ENCODE measurements at regions of chr11 and their contacts with region 1.

Region 1: GRCh38 chr11:65506770-65507505 is 8.1 kb downstream of the MALAT1 start:
- DNase-seq: peak; percentile 43
- H3K4me3 Mint-ChIP-seq: no peak overlapping the region
- H3K27ac Mint-ChIP-seq: no peak overlapping the region
- H3K4me1 Mint-ChIP-seq: peaks cover 18% of the 10 kb centered on the region
- H3K27me3 Mint-ChIP-seq: peaks cover 9% of the 10 kb centered on the region
- CTCF ChIP-seq: no peak

Region 2: DNA sequence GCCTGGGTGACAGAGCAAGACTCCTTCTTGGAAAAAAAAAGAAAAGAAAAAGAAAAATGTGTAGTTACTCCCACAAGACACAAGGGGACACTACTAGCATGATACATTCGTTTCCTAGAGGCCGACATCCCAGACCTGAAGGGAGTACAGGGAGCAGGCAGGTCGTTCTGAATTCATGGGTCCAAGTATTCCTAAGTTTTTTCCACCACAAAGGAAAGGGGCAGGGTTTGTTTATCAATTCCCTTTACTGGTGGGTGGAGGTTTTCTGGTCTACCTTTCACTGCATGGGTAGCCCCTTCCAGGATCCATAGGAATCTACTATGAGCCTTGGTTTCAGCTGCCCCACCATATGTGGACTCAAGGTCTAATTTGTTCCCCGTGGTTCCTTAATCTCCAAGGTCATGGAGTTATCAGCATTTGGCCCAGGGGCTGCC is 140.6 kb before region 1 on chr11:
- CTCF ChIA-PET with region 1: no interaction called
- intact Hi-C with region 1: loop called (anchors 1 kb)
- DNase-seq: peak; percentile 49
- H3K4me3 Mint-ChIP-seq: no peak overlapping the region
- H3K27ac Mint-ChIP-seq: no peak overlapping the region
- H3K4me1 Mint-ChIP-seq: peaks cover 11% of the 10 kb centered on the region
- H3K27me3 Mint-ChIP-seq: no peaks in the 10 kb centered on the region
- CTCF ChIP-seq: peak; percentile 72

Region 3: GRCh38 chr11:65382033-65382807 is 124.7 kb before region 1 on chr11 and contains the start of gene SLC25A45:
- CTCF ChIA-PET with region 1: interaction called, 12 read pairs
- intact Hi-C with region 1: loop called (anchors 1 kb)
- DNase-seq: peak; percentile 98
- H3K4me3 Mint-ChIP-seq: peak within 1 kb of the TSS; percentile 58
- H3K27ac Mint-ChIP-seq: peak within 1 kb of the TSS; percentile 81
- H3K4me1 Mint-ChIP-seq: peaks cover 68% of the 10 kb centered on the region
- H3K27me3 Mint-ChIP-seq: no peaks in the 10 kb centered on the region
- CTCF ChIP-seq: peak; percentile 78
- total RNA-seq, gene SLC25A45: 2.9 and 4.0 TPM in 2 replicates

Region 4: GRCh38 chr11:65429724-65430405 is 77.1 kb before region 1 on chr11:
- CTCF ChIA-PET with region 1: interaction called, 3 read pairs
- intact Hi-C with region 1: loop called (anchors 2 kb)
- DNase-seq: peak; percentile 73
- H3K4me3 Mint-ChIP-seq: peak overlapping the region; percentile 90
- H3K27ac Mint-ChIP-seq: peak overlapping the region; percentile 99
- H3K4me1 Mint-ChIP-seq: peaks cover 69% of the 10 kb centered on the region
- H3K27me3 Mint-ChIP-seq: no peaks in the 10 kb centered on the region
- CTCF ChIP-seq: no peak

Region 5: DNA sequence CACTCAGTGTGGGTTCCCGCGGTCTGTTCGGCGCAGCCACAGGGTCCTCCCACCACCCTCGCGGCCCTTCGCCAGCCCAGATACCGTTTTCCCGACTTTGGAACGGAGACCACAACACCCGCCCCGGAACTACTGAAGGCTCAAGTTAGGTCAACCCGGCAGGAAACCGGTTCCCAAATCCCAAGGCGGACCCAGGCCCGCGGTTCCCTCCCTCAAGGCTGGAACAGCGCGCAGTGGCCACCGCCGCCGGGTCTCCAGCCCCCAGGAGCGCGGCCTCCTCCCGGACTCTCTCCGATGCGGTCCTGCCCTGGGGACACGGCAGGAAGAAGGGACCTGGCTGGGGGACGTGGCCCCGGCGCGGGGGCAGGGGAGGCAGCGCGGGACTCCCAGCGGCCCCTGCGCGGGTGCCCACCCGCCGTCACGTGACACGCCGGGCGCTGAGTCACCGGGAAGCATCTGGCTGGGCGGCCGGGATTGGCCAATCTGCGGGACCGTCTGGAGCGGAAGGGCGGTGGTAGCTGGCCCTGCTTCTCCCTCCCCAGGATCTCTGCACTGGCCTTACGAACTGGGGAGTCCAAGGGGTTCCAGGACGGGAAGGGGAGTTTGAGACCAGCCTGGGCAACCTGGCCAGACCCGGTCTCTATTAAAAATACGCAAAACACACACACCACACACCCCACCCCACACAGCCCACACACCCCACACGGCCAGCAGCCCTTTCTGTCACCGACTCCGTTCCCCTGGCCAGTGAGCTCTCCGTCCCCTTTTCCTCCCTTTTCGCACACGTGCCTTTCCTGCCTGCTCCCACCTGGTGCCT is 29.6 kb before region 1 on chr11:
- CTCF ChIA-PET with region 1: interaction called, 20 read pairs
- intact Hi-C with region 1: loop called (anchors 2 kb)
- DNase-seq: peak; percentile 98
- H3K4me3 Mint-ChIP-seq: peak overlapping the region; percentile 89
- H3K27ac Mint-ChIP-seq: peak overlapping the region; percentile 98
- H3K4me1 Mint-ChIP-seq: peaks cover 48% of the 10 kb centered on the region
- H3K27me3 Mint-ChIP-seq: no peaks in the 10 kb centered on the region
- CTCF ChIP-seq: no peak

Region 6: GRCh38 chr11:65615229-65615941 is 108.4 kb after region 1 on chr11 and contains the start of gene PCNX3:
- CTCF ChIA-PET with region 1: no interaction called
- intact Hi-C with region 1: no loop called
- DNase-seq: peak; percentile 99
- H3K4me3 Mint-ChIP-seq: peak within 1 kb of the TSS; percentile 93
- H3K27ac Mint-ChIP-seq: peak within 1 kb of the TSS; percentile 95
- H3K4me1 Mint-ChIP-seq: peaks cover 29% of the 10 kb centered on the region
- H3K27me3 Mint-ChIP-seq: no peaks in the 10 kb centered on the region
- CTCF ChIP-seq: no peak
- total RNA-seq, gene PCNX3: 72.8 and 77.4 TPM in 2 replicates